ENCODE measurements at regions of chr1 and their contacts with region 1.

Region 1: DNA sequence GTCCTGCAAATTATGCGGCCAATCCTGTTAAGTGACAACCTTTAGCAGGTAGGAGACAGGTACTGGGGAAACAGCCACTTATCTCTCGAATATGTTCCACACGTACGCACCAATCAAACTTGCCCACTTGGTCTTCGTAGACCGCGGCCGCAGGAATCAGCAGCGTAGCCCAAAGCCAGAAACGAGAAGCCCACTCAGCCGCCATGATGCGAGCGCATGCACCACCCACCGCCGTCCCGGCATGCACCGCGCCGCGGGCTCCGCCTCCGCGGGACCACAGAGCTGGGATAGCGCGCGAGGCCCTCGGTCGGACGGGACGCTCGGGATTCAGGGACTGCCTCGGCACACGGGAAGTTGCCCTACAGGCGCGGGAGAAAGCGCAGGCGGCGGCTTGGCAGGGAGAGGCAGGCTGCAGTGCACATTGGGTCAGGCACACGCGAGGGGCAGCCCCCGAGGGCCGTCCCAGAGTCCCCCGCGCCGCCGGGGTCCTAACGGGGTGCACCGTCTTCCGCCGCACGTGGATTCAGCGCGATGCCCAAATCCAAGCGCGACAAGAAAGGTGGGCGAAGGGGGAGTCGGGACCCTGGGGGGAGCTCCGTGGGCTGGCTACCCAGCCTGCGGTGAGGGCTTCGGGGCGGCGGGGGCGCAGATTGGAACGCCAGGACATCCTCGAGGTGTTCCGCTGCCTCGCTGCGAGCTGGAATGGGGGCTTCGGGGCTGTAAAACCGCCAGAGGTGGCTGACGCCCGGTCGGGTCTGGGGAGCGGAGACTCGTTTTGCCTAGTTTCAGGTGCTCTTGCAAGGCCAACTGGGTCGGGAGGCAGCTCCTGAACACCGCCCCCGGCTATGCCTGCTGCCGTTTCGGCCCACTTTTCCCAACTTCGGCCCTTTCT is at the starts of genes EMC1 and MRTO4:
- DNase-seq: peak; percentile 82 to 98 (median 93)

Region 2: DNA sequence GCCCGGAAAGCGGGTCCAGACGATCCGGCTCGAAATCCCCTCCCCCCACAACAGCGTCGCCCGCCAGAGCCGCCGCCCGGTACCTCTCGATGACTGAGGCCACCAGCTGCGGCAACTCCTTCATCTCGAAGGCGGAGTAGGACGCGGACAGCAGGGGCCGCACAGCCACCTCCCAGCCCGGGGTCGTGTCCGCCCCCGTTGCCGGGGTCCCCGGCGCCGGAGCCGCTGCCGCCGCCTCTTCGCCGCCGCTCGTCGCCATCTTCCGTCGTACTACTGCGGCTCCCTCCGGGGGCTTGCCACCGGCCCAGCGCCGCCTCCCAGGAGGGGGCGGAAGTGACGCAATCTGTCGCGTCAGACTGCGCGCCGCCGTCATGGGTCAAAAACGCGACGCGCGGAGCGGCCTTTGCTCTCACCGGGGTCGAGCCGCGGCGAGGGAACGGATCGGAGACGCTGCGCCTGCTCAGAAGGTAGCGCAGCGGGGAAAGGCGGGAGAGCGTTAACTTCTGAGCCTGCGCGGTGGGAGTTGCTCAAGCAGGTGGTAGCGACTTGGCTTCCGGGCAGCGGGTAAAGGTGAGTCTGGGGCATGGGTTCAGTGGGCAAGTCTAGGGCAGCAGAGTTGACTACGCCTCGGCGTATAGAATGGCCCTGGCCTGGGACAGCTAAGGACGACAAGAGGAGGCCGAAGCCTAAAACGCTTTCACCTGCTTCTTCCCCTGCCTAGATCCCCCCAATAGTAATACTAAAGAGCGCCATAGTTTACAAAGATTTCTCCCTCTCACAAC is 41.4 kb before region 1 on chr1 and contains the start of gene UBR4:
- intact Hi-C with region 1: loop called (anchors 5 kb)
- DNase-seq: peak; percentile 78 to 97 (median 95)

Region 3: DNA sequence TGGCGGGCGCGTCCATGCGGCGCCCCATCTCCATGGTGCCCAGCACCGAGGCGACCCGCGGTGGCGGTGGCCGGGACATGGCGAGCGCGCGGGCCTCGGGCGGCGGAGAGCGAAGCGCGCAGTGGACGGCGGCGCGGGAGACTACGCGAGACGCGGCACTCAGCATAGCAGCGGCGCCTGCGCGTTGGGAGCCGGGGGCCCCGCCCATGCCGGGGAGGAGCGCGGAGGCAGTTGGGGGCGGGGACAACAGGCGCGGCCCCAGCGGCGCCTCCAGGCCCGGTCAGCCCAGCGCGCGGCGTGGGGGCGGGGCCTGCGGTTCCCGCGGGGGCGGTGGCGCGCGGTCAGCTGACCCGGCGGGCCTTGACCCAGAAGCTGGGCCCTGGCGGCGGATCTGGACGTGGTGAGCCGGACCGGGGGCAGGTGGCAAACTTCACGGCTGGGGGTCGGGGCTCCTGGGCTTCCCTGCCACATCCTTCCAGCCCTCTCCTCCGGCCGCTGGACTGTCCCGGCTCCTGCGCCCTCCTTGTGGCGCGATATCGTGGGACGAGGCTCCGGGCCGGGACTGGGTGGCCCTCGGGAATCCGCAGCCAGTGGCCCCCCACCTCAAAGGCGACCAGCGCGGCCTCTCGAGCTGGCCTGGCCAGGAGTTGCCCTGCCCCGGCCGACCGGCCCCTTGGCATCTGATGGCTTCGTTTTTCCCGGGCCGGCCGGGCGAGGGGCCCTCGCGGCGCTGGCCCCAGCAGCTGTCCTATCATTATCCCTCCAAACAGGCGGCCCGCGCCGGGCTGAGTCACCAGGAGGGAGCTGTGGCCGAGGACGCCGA is 60.6 kb after region 1 on chr1 and contains the starts of genes AKR7A2 and SLC66A1:
- intact Hi-C with region 1: loop called (anchors 5 kb)
- DNase-seq: peak; percentile 76 to 98 (median 94)

Measured in head of caudate nucleus (tissue), 42 donors.